ENCODE measurements at regions of chr6 and their contacts with region 1.

Region 1: GRCh38 chr6:134640975-134641429 is 308.9 kb downstream of the ALDH8A1 start:
- DNase-seq: peak; percentile 79 to 90 (median 84)
- ATAC-seq: peak; percentile 89
- H3K4me3 ChIP-seq: no peak overlapping the region
- H3K27ac ChIP-seq: peak overlapping the region in 2 of 4 donors; percentile 23 to 31
- H3K4me1 ChIP-seq: peaks cover 14% of the 10 kb centered on the region
- H3K27me3 ChIP-seq: no peaks in the 10 kb centered on the region
- CTCF ChIP-seq: peak; percentile 82 to 97 (median 96)
- POLR2A ChIP-seq: peak in 1 of 3 donors; percentile 7

Region 2: DNA sequence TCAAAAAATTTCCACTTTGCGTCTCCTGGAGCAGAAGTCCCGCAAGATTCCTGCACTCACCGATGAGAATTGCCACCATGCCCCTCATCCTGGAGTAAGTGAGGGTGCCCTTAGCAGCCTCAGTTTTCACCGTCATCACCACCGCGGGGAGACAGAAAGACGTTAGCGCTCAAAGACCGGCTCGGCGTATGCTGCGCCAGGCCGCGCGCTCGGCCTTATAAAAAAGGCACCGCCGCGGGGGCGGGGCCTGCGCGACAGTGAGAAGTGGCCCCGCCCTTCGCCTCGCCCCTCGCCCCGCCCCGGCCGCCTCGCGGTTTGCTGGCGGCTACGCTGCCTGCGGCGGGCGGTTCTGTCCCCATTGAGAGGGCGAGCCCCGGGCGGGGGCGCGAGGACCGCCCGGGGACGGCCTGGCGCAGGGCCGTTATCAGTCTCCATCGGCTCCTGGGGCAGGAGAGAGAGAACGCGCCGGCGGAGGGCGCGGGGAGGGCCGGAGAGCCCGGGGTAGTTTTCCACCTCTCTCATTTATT is 466.3 kb before region 1 on chr6:
- intact Hi-C with region 1: loop called (anchors 5 kb)
- DNase-seq: peak; percentile 95 to 97 (median 96)
- ATAC-seq: peak; percentile 78
- H3K4me3 ChIP-seq: peak overlapping the region; percentile 57 to 87
- H3K27ac ChIP-seq: peak overlapping the region; percentile 98 to 100 (median 99)
- H3K4me1 ChIP-seq: peaks cover 45% of the 10 kb centered on the region
- H3K27me3 ChIP-seq: no peaks in the 10 kb centered on the region
- CTCF ChIP-seq: peak in 2 of 7 experiments; percentile 0 to 23
- POLR2A ChIP-seq: peak; percentile 96 to 100 (median 100)

Region 3: GRCh38 chr6:134814086-134814709 is 173.2 kb after region 1 on chr6:
- intact Hi-C with region 1: loop called (anchors 10 kb)
- DNase-seq: no peak
- ATAC-seq: no peak
- H3K4me3 ChIP-seq: no peak overlapping the region
- H3K27ac ChIP-seq: no peak overlapping the region
- H3K4me1 ChIP-seq: no peaks in the 10 kb centered on the region
- H3K27me3 ChIP-seq: no peaks in the 10 kb centered on the region
- CTCF ChIP-seq: no peak
- POLR2A ChIP-seq: no peak